GM13977 (cell line): ENCODE measurements at regions of chr9 and their contacts with region 1.

Region 1: GRCh38 chr9:110058304-110058953 is 149.5 kb downstream of the C9orf152 start:
- DNase-seq: peak; percentile 42
- CTCF ChIP-seq: peak; percentile 76

Region 2: DNA sequence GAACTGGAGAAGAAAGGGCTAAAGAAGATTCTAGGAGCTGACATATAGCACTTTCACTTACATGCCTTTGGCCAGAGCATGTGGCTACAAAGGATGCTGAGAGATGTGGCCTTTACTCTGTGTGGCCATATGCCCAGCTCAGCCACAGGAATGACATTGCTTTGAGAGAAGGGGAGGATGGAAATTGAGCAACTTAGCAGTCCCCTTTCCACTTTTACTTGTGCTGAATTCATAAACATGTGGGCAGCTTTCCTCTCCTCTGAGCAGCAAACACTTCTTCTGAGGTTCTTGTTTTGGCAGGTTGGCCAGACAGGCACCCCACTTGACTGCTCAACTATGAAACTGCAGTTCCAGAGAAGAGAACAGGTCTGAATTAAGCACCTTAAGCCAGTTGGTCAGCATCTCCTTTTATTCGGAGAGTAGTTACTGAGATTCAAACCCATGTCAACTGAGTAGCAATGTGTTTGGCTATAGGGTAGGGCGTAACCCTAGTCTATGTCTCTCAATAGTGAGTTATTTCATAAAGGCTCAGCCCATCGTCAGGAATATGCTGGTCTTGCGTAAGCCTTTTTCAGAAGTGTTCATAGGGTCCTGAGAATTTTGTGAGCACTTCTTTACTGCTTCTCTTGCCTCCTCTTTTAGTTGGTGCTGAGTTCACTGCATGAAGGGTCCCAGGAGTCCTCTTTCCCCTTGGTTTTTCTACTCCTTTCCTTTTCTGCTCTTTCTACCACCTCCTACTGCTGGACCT is 144.0 kb before region 1 on chr9:
- in situ Hi-C with region 1: loop called (anchors 5 kb)
- DNase-seq: peak; percentile 20
- CTCF ChIP-seq: no peak

Region 3: GRCh38 chr9:109972026-109972882 is 86.2 kb before region 1 on chr9:
- in situ Hi-C with region 1: loop called (anchors 10 kb)
- DNase-seq: no peak
- CTCF ChIP-seq: peak; percentile 41

Region 4: DNA sequence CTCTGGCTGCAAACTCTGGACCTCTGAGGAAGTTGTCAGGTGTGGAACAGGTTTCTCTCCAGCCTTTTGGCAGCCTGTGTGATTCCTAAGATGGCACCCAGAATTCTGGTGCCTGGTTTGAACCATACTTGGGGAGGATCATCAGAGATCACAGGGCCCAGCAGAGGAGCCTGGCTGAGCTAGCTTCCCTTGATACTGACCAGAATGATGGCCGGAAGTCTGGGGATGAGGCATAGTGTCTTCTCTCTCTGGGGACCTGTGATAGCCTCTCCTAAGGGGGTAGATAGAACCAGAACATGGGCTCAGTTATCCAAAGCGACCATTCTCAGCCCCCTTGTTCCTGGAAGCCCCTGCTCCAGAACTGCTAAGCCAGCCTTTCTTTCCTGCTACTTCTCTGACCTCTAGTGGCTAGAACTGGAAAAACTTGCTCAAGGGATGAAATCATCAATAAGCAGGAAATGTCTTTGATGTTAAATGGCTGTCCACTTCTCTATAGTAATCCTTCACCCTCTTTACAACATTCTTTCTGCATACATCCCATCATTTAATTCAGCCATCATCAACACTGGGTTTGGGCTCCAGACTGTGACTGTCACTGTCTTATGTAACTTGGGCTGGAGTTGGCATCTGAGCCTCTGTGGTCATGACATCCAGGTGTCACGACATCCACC is 94.4 kb after region 1 on chr9:
- in situ Hi-C with region 1: loop called (anchors 25 kb)
- DNase-seq: peak; percentile 27
- CTCF ChIP-seq: peak; percentile 74